ENCODE measurements at regions of chr20 and their contacts with region 1.

Region 1: GRCh38 chr20:37534401-37535157 is 6.9 kb upstream of the BLCAP start:
- DNase-seq: peak in 2 of 5 donors; percentile 43 to 49
- ATAC-seq: peak; percentile 78 to 91 (median 87)
- H3K4me3 ChIP-seq: no peak overlapping the region
- H3K27ac ChIP-seq: peak overlapping the region in 1 of 12 donors; percentile 31
- H3K4me1 ChIP-seq: peaks cover 0 to 7% (median 0%) of the 10 kb centered on the region in 12 donors
- H3K27me3 ChIP-seq: no peaks in the 10 kb centered on the region
- CTCF ChIP-seq: peak; percentile 72 to 93 (median 88)
- POLR2A ChIP-seq: no peak

Region 2: GRCh38 chr20:37192137-37192854 is 342.3 kb before region 1 on chr20:
- intact Hi-C with region 1: loop called in 9 of 10 experiments (anchors 2 to 5 kb)
- DNase-seq: peak; percentile 84 to 94 (median 89)
- ATAC-seq: peak; percentile 42 to 91 (median 90)
- H3K4me3 ChIP-seq: no peak overlapping the region
- H3K27ac ChIP-seq: no peak overlapping the region
- H3K4me1 ChIP-seq: peaks cover 0 to 54% (median 28%) of the 10 kb centered on the region in 12 donors
- H3K27me3 ChIP-seq: no peaks in the 10 kb centered on the region
- CTCF ChIP-seq: peak; percentile 81 to 98 (median 92)
- POLR2A ChIP-seq: no peak

Region 3: GRCh38 chr20:37202267-37202943 is 332.2 kb before region 1 on chr20:
- intact Hi-C with region 1: loop called in 5 of 10 experiments (anchors 2 to 5 kb)
- DNase-seq: no peak
- ATAC-seq: peak in 3 of 4 donors; percentile 40 to 81 (median 62)
- H3K4me3 ChIP-seq: no peak overlapping the region
- H3K27ac ChIP-seq: peak overlapping the region in 4 of 12 donors; percentile 5 to 44 (median 30)
- H3K4me1 ChIP-seq: peaks cover 0 to 12% (median 0%) of the 10 kb centered on the region in 12 donors
- H3K27me3 ChIP-seq: no peaks in the 10 kb centered on the region
- CTCF ChIP-seq: peak; percentile 61 to 84 (median 73)
- POLR2A ChIP-seq: no peak

Region 4: DNA sequence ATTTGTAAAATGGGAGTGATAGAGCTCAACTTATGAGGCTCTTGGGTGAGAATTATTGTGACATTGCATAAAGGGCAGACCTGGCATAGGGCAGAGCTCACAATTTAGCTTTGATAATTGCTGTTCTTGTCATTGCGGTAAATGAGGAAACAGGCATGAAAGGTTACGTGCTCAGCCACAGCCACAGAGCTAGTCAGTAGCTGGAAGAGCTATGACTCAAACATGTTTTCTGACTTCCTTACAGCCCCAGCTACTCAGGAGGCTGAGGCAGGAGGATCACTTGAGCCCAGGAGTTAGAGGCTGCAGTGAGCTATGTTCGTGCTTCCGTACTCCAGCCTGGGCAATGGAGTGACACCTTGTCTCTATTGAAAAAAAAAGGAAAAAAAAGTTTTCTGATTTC is 269.4 kb before region 1 on chr20:
- intact Hi-C with region 1: loop called (anchors 1 to 2 kb)
- DNase-seq: no peak
- ATAC-seq: no peak
- H3K4me3 ChIP-seq: no peak overlapping the region
- H3K27ac ChIP-seq: no peak overlapping the region
- H3K4me1 ChIP-seq: peaks cover 0 to 4% (median 0%) of the 10 kb centered on the region in 12 donors
- H3K27me3 ChIP-seq: peaks cover 0 to 23% (median 3%) of the 10 kb centered on the region in 9 donors
- CTCF ChIP-seq: no peak
- POLR2A ChIP-seq: no peak

Region 5: GRCh38 chr20:37270576-37271420 is 263.8 kb before region 1 on chr20:
- intact Hi-C with region 1: loop called (anchors 1 to 2 kb)
- DNase-seq: no peak
- ATAC-seq: peak in 3 of 4 donors; percentile 35 to 65 (median 46)
- H3K4me3 ChIP-seq: no peak overlapping the region
- H3K27ac ChIP-seq: peak overlapping the region in 2 of 12 donors; percentile 17 to 84
- H3K4me1 ChIP-seq: peaks cover 0 to 28% (median 0%) of the 10 kb centered on the region in 12 donors
- H3K27me3 ChIP-seq: peaks cover 0 to 3% (median 0%) of the 10 kb centered on the region in 9 donors
- CTCF ChIP-seq: no peak
- POLR2A ChIP-seq: no peak

Region 6: GRCh38 chr20:37392421-37393178 is 142.0 kb before region 1 on chr20:
- intact Hi-C with region 1: loop called in 5 of 10 experiments (anchors 5 to 10 kb)
- DNase-seq: peak in 1 of 5 donors; percentile 37
- ATAC-seq: no peak
- H3K4me3 ChIP-seq: no peak overlapping the region
- H3K27ac ChIP-seq: no peak overlapping the region
- H3K4me1 ChIP-seq: peaks cover 0 to 15% (median 0%) of the 10 kb centered on the region in 12 donors
- H3K27me3 ChIP-seq: no peaks in the 10 kb centered on the region
- CTCF ChIP-seq: peak in 5 of 12 donors; percentile 13 to 23 (median 16)
- POLR2A ChIP-seq: no peak

Region 7: GRCh38 chr20:37734228-37734985 is 199.8 kb after region 1 on chr20:
- intact Hi-C with region 1: no loop called
- DNase-seq: no peak
- ATAC-seq: no peak
- H3K4me3 ChIP-seq: no peak overlapping the region
- H3K27ac ChIP-seq: peak overlapping the region in 3 of 12 donors; percentile 16 to 34 (median 31)
- H3K4me1 ChIP-seq: peaks cover 0 to 64% (median 24%) of the 10 kb centered on the region in 12 donors
- H3K27me3 ChIP-seq: no peaks in the 10 kb centered on the region
- CTCF ChIP-seq: no peak
- POLR2A ChIP-seq: no peak